ENCODE measurements at regions of chr14 and their contacts with region 1.

Region 1: DNA sequence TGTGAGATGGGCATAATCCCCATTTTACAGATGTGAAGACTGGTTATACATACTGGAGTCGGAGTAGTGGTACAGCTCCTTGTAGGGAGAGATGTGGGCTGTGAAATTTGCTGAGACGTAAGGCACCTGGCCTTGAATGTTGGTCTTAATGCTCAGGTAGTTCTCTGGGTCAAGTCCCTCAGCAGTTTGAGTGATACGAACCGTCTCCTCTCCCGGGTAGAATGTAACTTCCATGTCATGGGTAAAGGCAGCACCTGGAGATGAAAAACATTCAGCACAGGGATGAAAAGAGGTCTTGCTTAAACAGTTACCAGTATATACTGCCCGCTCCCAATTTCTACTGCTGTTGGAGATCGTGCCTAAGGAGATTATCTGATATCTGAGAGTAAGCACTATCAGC is 28.3 kb downstream of the NID2 start:
- DNase-seq: no peak

Region 2: GRCh38 chr14:52086711-52087110 is 46.1 kb after region 1 on chr14:
- intact Hi-C with region 1: loop called in 1 of 2 experiments (anchors 1 kb)
- DNase-seq: no peak